Vagina (tissue), 2 donors: ENCODE measurements at regions of chr16 and their contacts with region 1.

Region 1: DNA sequence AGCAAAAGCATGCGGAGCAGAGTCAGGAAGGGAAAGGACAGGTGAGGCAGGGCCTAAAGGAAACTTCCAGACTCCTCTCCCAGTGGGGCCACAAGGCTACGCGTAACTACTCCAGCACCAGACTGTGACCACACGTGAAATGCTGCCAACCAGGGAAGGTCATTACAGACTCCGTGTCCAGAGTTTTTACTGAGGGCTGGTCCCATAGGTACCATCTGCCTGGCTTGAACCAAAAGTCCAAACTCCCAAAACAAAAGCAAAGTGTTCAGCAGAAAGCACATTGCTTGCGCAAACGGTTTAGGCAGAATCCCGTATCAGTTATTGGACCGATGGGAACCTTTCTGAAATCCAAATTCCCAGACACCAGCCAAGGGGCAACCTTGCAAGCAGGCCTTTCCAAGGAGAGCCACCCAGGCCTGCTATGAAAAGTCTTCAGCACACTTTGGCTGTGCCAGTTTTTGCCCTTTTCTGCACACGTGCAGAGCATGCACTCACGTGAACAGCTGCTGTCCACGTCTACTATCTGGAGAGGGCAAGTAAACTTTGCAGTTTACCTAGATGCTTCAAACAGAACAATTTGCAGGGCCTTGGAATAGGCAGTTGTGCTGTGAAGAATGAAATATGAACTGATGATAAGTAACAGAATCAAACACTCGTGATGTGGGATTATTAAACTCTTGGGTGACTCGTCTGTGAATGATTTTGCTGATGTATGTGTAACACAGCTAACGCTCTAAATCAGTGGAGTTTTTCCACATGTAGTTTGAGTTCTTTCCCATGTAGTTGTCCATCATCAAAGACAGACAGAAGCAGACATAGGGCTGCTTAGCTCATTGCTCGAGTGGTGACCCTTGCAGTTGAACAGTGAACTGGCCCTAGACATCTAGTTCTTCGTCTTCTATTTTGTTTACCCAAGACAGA is 58.1 kb upstream of the CRISPLD2 start:
- DNase-seq: no peak
- H3K4me3 ChIP-seq: no peak overlapping the region
- H3K27ac ChIP-seq: no peak overlapping the region
- H3K4me1 ChIP-seq: no peaks in the 10 kb centered on the region
- H3K27me3 ChIP-seq: no peaks in the 10 kb centered on the region
- CTCF ChIP-seq: no peak
- POLR2A ChIP-seq: no peak

Region 2: DNA sequence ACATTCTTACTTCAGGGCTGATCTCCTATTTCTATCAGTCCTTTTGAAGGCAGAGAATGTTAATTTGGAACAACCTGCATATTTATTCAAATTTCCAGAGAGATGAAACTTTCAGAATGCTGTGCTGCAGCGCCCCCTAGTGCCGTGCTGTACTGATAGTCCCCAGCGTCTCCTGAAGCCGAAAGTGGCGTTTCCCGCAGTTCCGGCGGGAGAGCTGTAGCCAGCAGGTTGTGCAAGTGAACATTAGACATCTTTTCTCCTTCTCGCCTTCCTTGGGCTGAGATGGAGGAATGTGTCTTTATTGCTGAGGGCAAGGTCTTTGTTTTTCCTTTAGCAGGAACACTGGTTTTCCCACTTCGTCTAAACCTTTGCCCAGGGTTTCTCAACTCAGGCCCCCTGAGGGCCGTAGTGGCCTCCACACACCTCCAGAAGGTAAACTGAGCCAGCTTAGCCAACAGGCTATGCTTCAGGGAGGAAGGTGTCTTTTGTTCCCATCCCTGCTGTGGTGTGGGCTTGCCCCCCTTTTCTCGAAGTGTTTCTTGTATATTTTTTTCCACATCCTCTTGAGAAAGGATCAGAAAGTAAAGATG is 35.5 kb before region 1 on chr16:
- intact Hi-C with region 1: no loop called
- DNase-seq: peak in 1 of 2 donors; percentile 88
- H3K4me3 ChIP-seq: no peak overlapping the region
- H3K27ac ChIP-seq: peak overlapping the region; percentile 24
- H3K4me1 ChIP-seq: peaks cover 60% of the 10 kb centered on the region
- H3K27me3 ChIP-seq: no peaks in the 10 kb centered on the region
- CTCF ChIP-seq: peak; percentile 72 to 95 (median 89)
- POLR2A ChIP-seq: no peak

Region 3: DNA sequence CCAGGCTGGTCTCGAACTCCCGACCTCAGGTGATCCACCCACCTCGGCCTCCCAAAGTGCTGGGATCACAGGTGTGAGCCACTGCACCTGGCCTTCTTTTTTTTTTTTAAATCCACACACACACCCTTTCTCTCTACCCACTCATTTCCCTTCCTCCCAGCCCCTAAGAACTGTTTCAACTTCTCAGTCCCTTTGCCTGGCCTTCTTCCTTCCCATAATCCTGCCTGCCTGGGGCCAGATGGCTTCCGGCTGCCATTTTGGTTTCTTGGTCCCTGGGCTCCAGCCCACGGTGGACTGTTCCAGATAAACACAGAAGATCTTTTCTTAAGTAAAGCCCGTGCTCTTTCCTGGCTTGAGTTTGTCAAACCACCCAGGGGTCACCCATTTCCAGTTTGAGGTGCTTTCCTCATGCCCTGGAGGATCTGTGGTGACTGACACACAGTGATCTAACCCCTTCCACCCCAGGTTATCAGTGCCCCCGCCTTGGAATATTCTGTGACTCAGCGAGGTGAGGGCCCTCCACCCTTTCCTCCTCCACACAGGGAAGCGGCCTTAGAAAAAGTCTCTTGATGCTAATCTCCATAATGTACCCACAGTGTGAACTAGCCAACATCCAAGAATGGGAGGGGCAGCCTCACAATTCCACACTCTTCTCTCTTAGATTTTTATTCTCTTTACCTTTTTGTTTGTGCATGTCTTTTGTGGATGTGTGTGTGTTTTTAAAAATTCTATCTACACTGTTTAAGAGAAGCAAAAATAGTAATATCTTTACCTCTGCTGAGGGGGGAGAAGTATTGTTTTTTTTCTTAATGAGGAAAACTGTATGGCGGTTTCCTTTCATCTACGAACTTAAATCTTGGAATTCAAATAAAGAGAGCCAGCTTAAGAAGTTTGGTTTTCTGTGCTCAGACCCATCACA is 118.1 kb after region 1 on chr16:
- intact Hi-C with region 1: loop called (anchors 5 kb)
- DNase-seq: no peak
- H3K4me3 ChIP-seq: no peak overlapping the region
- H3K27ac ChIP-seq: peak overlapping the region; percentile 48
- H3K4me1 ChIP-seq: peaks cover 14% of the 10 kb centered on the region
- H3K27me3 ChIP-seq: no peaks in the 10 kb centered on the region
- CTCF ChIP-seq: no peak
- POLR2A ChIP-seq: no peak